H1 (cell line): ENCODE measurements at regions of chr1 and their contacts with region 1.

Region 1: DNA sequence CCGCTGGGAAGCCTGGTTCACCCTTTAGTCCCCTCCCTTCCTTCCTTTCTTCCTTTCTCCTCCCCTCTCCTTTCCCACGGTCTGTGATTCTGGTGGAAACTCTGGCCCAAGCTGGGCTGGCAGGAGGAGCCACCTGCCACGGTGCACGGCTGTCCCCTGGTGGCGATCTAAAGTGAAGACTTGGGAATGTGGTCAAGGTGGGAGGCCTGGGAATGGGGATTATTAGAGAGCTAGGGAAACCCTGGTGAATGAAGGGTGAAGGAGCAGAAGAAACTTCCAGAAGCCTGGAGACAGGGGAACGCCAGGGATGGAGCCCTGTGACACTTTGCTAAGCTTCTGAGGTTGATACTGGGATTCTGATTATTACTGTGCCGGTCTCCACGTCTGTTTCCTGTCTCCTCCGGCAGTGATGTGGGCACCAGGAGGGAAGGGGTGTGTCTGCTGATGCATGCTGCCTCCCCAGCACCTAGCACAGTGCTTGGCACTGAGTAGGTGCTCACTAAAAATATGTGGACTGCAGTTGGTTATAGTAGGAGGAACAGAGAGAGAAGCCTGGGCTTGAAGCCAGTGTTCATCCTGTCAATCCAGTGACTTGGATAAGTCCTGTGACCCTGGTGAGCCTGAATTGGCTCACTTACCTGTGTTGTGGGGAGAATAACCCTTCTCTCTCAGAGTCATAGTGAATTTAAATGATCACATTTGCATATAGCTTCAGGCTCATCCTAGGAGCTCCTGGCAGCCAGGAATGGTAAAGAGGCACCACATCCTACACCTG is 71.2 kb upstream of the NBPF3 start:
- DNase-seq: peak; percentile 56 to 85
- H3K4me3 ChIP-seq: no peak overlapping the region
- H3K27ac ChIP-seq: no peak overlapping the region
- H3K4me1 ChIP-seq: no peaks in the 10 kb centered on the region; a peak in 1 of 7 replicates
- H3K27me3 ChIP-seq: no peaks in the 10 kb centered on the region
- CTCF ChIP-seq: peak; percentile 96 to 98 (median 98)
- EP300 ChIP-seq: no peak
- POLR2A ChIP-seq: no peak
- RAD21 ChIP-seq: peak; percentile 100

Region 2: DNA sequence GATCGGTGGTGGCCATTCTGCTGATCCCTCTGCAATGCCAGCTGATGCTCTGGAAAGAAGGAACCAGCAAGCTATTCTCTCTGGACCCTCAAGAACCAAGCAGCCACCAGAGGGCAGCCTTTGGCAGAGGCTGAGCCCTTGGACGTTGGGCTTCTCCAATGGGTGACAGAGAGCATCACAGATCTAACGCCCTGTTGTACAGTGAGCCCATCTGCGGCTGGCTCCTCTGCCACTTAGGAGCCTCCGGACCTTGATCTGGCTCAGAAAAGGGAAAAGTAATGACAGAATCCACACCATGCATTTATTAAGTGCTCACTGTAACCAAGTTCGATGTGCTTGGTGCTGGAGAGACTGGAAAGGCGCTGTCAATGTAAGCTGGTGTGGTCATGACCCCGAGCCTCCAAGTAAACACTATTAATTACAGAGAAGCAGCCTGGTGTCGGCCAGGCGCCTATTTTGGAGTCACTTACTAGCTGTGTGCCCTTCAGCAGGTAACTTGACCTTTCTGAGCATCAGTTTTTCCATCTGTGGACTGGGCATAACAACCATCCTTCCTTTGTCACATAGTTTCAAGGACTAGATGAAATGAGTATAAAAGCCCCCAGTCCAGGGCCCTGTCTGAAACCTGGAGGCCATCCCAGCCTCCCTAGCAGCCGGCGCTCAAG is 113.3 kb before region 1 on chr1:
- CTCF ChIA-PET with region 1: interaction called, 374 read pairs
- POLR2A ChIA-PET with region 1: interaction called, 8 read pairs
- DNase-seq: peak; percentile 62 to 95
- H3K4me3 ChIP-seq: no peak overlapping the region
- H3K27ac ChIP-seq: no peak overlapping the region
- H3K4me1 ChIP-seq: no peaks in the 10 kb centered on the region
- H3K27me3 ChIP-seq: no peaks in the 10 kb centered on the region
- CTCF ChIP-seq: peak; percentile 82 to 98 (median 97)
- EP300 ChIP-seq: no peak
- POLR2A ChIP-seq: no peak
- RAD21 ChIP-seq: peak; percentile 95 to 96

Region 3: GRCh38 chr1:21308847-21309652 is 59.7 kb before region 1 on chr1:
- CTCF ChIA-PET with region 1: interaction called, 16 read pairs
- POLR2A ChIA-PET with region 1: no interaction called
- DNase-seq: no peak
- H3K4me3 ChIP-seq: no peak overlapping the region
- H3K27ac ChIP-seq: no peak overlapping the region
- H3K4me1 ChIP-seq: peaks cover 15 to 40% (median 22%) of the 10 kb centered on the region in 4 experiments
- H3K27me3 ChIP-seq: no peaks in the 10 kb centered on the region
- CTCF ChIP-seq: no peak
- EP300 ChIP-seq: no peak
- POLR2A ChIP-seq: no peak
- RAD21 ChIP-seq: no peak

Region 4: GRCh38 chr1:21378705-21379494 is 10.2 kb after region 1 on chr1:
- CTCF ChIA-PET with region 1: interaction called, 25 read pairs
- POLR2A ChIA-PET with region 1: no interaction called
- DNase-seq: no peak
- H3K4me3 ChIP-seq: no peak overlapping the region
- H3K27ac ChIP-seq: no peak overlapping the region
- H3K4me1 ChIP-seq: peaks cover 0 to 3% (median 3%) of the 10 kb centered on the region in 4 experiments; a peak in 3 of 7 replicates
- H3K27me3 ChIP-seq: no peaks in the 10 kb centered on the region
- CTCF ChIP-seq: no peak
- EP300 ChIP-seq: no peak
- POLR2A ChIP-seq: no peak
- RAD21 ChIP-seq: no peak

Region 5: DNA sequence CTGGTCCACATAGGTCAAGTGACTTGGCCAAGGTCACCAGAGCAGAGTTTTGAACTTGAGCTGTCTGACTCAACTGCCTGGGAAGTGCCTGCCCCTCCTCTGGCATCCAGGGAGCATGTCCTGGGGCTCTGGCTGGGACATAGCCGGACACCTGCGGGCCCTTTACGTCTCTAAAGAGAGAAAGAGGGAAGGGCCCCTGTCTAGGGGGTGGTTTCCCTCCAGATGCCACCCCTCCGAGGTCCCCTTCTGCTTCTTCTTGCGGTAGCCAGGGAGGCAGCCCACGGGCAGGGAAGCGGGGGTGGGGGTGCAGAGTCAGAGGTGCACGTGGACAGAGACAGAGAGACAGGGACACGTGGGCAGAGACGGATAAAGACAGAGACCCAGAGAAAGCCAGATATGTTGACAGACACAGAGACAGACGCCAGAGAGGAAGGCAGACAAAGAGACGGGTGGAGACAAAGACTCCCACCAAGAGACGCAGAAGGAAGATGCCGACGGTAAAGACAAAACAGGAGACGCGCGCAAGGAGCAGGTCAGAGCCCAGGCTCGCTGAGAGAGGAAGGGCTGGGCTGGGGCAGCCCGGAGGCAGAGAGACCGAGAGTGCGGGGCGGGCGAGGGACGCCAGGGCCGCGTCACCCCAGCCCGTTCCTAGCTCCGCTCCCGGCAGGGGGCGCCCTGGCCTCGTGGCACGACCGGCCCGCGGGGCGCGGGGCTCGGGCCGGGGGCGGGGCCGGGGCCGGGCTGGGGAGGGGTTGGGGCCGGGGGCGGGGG is 140.1 kb after region 1 on chr1:
- CTCF ChIA-PET with region 1: interaction called, 95 read pairs
- POLR2A ChIA-PET with region 1: no interaction called
- DNase-seq: peak; percentile 67 to 97
- H3K4me3 ChIP-seq: peak overlapping the region; percentile 14 to 78 (median 42); a peak in 6 of 8 replicates
- H3K27ac ChIP-seq: no peak overlapping the region
- H3K4me1 ChIP-seq: peaks cover 14 to 22% (median 17%) of the 10 kb centered on the region in 4 experiments
- H3K27me3 ChIP-seq: peaks cover 0 to 17% (median 10%) of the 10 kb centered on the region in 4 experiments; a peak in 6 of 7 replicates
- CTCF ChIP-seq: peak; percentile 69 to 83 (median 79)
- EP300 ChIP-seq: no peak
- POLR2A ChIP-seq: peak in 1 of 2 experiments; percentile 45; a peak in 1 of 3 replicates
- RAD21 ChIP-seq: peak; percentile 59 to 77

Region 6: DNA sequence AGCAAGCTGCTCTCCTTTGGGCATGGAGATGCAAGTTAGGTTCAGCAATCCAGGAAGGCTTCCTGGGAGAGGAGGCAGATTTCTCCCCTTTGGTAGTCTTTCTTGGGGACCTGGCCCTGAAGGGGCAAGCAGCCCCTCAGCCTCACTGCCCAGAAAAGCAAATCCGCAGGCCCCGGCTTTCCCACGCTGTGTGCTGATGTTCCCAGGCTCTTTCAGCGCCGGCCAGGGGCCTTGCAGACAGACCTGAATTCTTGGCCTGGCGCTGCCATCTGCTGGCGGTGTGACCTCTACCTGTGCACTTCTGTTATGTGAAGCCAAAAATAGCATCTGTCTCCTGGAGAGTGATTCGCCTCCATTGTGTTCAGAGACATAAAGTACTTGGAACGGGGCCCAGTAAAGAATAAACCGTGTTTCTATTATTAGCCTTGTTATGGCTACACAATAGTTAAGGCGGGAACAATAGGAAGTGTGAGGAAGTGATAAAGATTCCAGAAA is 205.3 kb after region 1 on chr1:
- CTCF ChIA-PET with region 1: interaction called, 49 read pairs
- POLR2A ChIA-PET with region 1: no interaction called
- DNase-seq: peak; percentile 57 to 82
- H3K4me3 ChIP-seq: no peak overlapping the region
- H3K27ac ChIP-seq: no peak overlapping the region
- H3K4me1 ChIP-seq: peaks cover 2 to 7% (median 4%) of the 10 kb centered on the region in 4 experiments; a peak in 6 of 7 replicates
- H3K27me3 ChIP-seq: no peaks in the 10 kb centered on the region; a peak in 2 of 7 replicates
- CTCF ChIP-seq: peak; percentile 70 to 87 (median 79)
- EP300 ChIP-seq: no peak
- POLR2A ChIP-seq: no peak
- RAD21 ChIP-seq: peak; percentile 92 to 95